CD8-positive, alpha-beta T cell (primary cell): ENCODE measurements at regions of chr6 and their contacts with region 1.

Region 1: GRCh38 chr6:119078376-119079282 is at the start of gene FAM184A:
- DNase-seq: peak; percentile 50 to 86 (median 71)
- ATAC-seq: peak; percentile 74
- H3K4me3 ChIP-seq: peak within 1 kb of the TSS; percentile 58 to 66
- H3K4me3 Mint-ChIP-seq: peak within 1 kb of the TSS; percentile 94
- H3K27ac ChIP-seq: peak within 1 kb of the TSS; percentile 34 to 46
- H3K27ac Mint-ChIP-seq: peak within 1 kb of the TSS; percentile 91
- H3K4me1 ChIP-seq: peaks cover 25% of the 10 kb centered on the region
- H3K4me1 Mint-ChIP-seq: peaks cover 32% of the 10 kb centered on the region
- H3K27me3 ChIP-seq: no peaks in the 10 kb centered on the region
- H3K27me3 Mint-ChIP-seq: no peaks in the 10 kb centered on the region
- CTCF ChIP-seq: no peak
- total RNA-seq, gene FAM184A: 0.50 to 0.79 TPM

Region 2: DNA sequence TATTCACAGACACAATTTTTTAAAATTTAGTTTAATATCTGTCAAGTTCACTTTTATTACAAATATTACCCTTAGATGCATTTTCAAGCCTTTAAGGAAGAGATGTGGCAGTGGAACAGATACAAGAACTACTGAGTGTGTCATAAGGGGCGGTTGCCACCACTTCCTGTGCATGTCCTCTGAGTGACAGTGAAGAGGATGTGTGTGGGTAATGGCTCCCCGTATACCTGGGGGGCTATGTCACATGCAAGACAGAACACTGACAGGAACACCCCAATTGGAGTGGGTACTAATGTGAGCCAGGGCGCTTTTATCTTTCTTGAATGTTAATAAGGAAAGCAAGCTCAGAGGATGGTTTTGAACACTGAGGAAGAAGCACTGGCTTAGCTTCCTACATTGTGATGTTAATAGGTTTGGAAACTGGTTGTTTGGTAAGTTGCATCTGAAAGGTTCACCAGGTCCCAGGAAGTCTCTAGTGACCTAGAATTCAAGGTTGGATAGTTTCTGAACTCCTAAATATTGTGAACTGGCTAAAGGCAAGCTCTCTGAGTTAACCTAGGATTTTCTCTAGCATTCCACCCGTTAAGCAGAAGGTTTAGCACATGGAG is 268.1 kb before region 1 on chr6:
- CTCF ChIA-PET with region 1: no interaction called
- POLR2A ChIA-PET with region 1: interaction called, 3 read pairs
- intact Hi-C with region 1: loop called in 1 of 2 experiments (anchors 10 kb)
- DNase-seq: peak; percentile 28 to 90 (median 74)
- ATAC-seq: peak; percentile 95
- H3K4me3 ChIP-seq: peak overlapping the region in 1 of 2 experiments; percentile 15
- H3K4me3 Mint-ChIP-seq: peak overlapping the region; percentile 55
- H3K27ac ChIP-seq: peak overlapping the region; percentile 42 to 80
- H3K27ac Mint-ChIP-seq: peak overlapping the region; percentile 87
- H3K4me1 ChIP-seq: peaks cover 28% of the 10 kb centered on the region
- H3K4me1 Mint-ChIP-seq: peaks cover 55% of the 10 kb centered on the region
- H3K27me3 ChIP-seq: no peaks in the 10 kb centered on the region
- H3K27me3 Mint-ChIP-seq: no peaks in the 10 kb centered on the region
- CTCF ChIP-seq: no peak

Region 3: GRCh38 chr6:119158057-119158848 is 79.6 kb after region 1 on chr6:
- CTCF ChIA-PET with region 1: no interaction called
- POLR2A ChIA-PET with region 1: no interaction called
- intact Hi-C with region 1: no loop called
- DNase-seq: no peak
- ATAC-seq: no peak
- H3K4me3 ChIP-seq: no peak overlapping the region
- H3K4me3 Mint-ChIP-seq: no peak overlapping the region
- H3K27ac ChIP-seq: no peak overlapping the region
- H3K27ac Mint-ChIP-seq: no peak overlapping the region
- H3K4me1 ChIP-seq: no peaks in the 10 kb centered on the region
- H3K4me1 Mint-ChIP-seq: no peaks in the 10 kb centered on the region
- H3K27me3 ChIP-seq: no peaks in the 10 kb centered on the region
- H3K27me3 Mint-ChIP-seq: peaks cover 7% of the 10 kb centered on the region
- CTCF ChIP-seq: no peak